ENCODE measurements at regions of chr1 and their contacts with region 1.

Region 1: DNA sequence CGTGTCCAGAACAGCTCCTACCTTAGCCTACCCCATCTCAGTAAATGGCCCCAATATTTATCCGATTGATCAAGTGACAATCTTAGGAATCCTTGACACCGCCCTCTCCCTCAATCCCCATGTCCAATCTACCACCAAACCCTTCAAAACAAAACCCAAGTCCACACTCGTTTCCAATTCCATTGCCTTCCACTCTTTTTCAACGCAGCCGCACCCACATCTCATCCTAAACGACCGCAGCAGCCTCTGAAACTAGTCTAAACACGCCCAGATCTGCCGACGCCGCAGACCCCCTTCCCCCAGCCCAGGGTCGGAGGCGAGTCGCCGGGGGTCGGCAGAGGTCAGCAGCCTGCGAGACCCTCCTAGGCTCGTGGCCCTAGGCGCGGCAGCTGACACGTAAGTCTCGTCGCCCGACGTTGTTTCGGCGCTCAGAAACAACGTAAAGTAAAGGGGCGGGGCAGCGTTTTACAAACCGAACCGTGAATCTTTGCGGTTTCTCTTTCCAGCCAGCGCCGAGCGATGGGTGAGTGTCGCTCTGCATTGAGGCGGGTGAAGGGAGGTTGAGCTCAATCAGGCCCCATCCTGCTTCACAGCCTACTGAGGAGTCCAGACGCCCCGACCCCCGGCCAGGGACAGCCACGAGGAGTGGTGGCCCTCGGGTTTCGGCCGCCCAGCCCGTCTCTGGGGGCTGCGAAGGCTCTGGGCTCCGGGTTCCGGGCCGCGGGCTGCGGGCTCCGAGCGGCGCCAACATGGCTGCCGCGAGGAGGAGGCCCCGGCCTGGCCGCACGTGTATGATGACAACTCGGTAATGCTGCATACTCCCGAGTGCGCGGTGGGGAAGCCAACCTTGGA is at the start of gene RPS8:
- DNase-seq: peak; percentile 96
- H3K4me3 Mint-ChIP-seq: peak within 1 kb of the TSS; percentile 91
- H3K27ac Mint-ChIP-seq: peak within 1 kb of the TSS; percentile 99
- H3K4me1 Mint-ChIP-seq: peaks cover 25% of the 10 kb centered on the region
- H3K27me3 Mint-ChIP-seq: no peaks in the 10 kb centered on the region
- CTCF ChIP-seq: no peak
- total RNA-seq, gene RPS8: 2,454 and 2,713 TPM in 2 replicates

Region 2: DNA sequence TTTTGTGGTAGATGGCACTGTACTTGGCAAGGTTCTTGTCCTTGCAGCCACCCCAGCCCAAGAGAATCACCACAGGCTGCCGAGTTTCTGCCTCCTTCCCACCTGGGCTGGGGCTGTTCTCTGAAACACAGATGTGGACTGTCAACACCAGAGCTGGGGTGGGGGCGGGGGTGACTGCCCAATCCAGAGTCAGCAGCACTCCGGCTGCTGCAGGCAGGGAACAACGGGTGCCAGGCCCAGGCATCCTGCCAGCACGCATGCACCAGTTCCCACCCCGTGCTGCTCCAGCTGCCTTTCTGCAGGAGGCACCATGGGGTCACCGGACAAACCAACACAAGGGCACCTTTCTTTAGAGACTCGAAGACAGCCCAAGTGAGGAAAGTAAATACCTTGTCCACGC is 115.1 kb before region 1 on chr1:
- CTCF ChIA-PET with region 1: no interaction called
- POLR2A ChIA-PET with region 1: no interaction called
- intact Hi-C with region 1: no loop called
- DNase-seq: peak; percentile 39
- H3K4me3 Mint-ChIP-seq: no peak overlapping the region
- H3K27ac Mint-ChIP-seq: no peak overlapping the region
- H3K4me1 Mint-ChIP-seq: peaks cover 6% of the 10 kb centered on the region
- H3K27me3 Mint-ChIP-seq: no peaks in the 10 kb centered on the region
- CTCF ChIP-seq: no peak

Region 3: DNA sequence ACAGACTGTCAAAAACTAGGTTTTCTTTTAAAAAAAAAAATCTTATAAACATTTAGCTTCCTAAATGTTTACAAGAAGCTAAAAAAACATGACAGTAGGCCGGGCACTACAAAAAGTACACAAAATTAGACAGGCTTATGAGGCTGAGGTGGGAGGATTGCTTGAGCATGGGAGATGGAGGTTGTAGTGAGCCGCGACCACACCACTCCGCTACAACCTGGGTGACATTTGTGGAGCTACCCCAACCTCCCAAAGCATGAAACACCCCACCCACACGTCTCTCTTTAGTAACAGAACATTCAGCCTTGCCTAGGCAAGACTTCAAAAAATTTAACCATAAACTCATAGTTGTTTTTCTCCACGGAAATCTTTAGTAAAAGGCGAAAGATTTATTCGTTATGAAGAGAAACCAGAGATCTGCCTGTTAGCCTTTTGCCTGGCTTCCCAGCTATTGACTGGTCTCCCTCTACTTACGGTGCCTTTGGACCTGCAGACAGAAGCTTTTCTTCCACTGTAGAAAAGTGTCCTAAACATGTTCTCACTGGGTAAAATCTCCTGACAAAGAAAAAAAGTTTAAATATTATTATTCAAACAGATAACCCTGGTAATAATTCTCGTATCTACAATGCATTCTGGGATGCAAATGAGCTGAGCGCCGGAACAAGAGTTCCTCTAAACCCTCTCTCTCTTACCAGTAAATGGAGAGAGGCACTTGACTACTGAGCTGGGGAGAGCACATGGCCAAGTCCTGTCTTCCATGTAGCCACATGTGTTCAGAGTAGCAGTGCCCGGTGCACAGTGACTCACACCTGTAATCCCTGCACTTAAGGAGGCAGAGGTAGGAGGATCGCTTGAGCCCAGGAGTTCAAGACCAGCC is 53.6 kb before region 1 on chr1:
- CTCF ChIA-PET with region 1: no interaction called
- POLR2A ChIA-PET with region 1: interaction called, 20 read pairs
- intact Hi-C with region 1: no loop called
- DNase-seq: peak; percentile 98
- H3K4me3 Mint-ChIP-seq: peak overlapping the region; percentile 39
- H3K27ac Mint-ChIP-seq: peak overlapping the region; percentile 98
- H3K4me1 Mint-ChIP-seq: peaks cover 23% of the 10 kb centered on the region
- H3K27me3 Mint-ChIP-seq: no peaks in the 10 kb centered on the region
- CTCF ChIP-seq: no peak

Region 4: DNA sequence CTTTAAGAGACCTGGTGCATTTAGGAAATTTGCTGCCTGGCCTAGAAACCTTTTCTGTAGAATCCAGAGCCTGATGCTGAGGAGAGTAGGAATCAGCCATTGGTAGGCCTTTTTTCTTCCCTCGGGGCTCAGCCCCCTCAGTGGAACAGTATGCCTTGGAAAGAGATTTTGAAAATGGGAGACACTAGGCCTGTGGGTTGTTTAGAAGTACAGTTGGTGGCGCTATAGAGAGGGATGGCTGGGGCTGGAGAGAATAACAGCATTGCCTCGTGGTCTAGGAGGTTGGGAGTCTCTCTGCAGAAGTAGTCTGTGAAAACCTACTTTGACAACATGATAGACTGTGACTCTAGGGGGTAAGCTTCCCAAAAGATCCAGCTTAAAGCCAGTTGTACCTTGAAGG is 27.4 kb before region 1 on chr1:
- CTCF ChIA-PET with region 1: interaction called, 5 read pairs
- POLR2A ChIA-PET with region 1: interaction called, 53 read pairs
- intact Hi-C with region 1: no loop called
- DNase-seq: no peak
- H3K4me3 Mint-ChIP-seq: no peak overlapping the region
- H3K27ac Mint-ChIP-seq: no peak overlapping the region
- H3K4me1 Mint-ChIP-seq: peaks cover 1% of the 10 kb centered on the region
- H3K27me3 Mint-ChIP-seq: no peaks in the 10 kb centered on the region
- CTCF ChIP-seq: no peak

Region 5: DNA sequence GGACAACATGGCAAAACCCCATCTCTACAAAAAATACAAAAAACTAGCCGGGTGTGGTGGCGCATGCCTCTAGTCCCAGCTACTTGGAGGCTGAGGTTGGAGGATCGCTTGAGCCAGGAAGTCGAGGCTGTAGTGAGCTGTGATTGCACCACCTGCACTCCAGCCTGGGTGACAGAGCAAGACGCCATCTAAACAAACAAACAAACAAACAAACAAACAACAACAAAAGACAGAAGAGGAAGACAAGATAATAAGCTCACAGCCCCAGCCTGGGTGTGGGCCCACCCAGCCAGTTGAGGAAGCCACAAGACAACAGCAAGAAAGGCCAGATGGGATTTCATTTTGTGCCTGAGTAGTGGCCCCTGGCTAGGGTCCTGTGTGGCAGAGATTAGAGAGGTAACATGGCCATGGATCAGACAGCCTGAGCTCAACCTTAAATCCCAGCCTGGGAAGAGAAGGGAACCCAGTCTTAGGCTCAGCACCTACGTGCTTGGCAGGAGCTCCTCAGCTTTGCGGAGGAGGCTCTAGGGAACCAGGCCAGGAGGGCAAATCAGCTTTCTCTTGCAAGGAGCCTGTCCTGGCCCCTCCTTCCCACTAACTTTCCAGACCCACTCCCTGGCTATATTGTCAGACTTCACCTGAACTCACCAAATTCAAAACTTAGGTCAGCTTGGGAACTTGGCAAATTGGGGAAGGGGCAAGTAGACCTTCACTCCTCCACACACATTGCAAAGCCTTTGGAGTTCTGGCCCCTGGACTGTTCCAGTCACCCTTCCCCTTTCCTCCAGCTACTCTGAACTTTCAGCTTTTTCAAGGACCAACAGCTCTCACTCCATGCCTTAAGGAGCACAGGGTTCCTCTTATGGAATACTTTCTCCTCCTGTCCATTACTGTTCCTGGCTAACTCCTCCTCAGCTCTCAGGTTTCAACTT is 17.7 kb after region 1 on chr1:
- CTCF ChIA-PET with region 1: interaction called, 14 read pairs
- POLR2A ChIA-PET with region 1: interaction called, 36 read pairs
- intact Hi-C with region 1: no loop called
- DNase-seq: no peak
- H3K4me3 Mint-ChIP-seq: no peak overlapping the region
- H3K27ac Mint-ChIP-seq: peak overlapping the region; percentile 85
- H3K4me1 Mint-ChIP-seq: peaks cover 7% of the 10 kb centered on the region
- H3K27me3 Mint-ChIP-seq: no peaks in the 10 kb centered on the region
- CTCF ChIP-seq: no peak

Region 6: GRCh38 chr1:44812822-44813543 is 37.7 kb after region 1 on chr1:
- CTCF ChIA-PET with region 1: interaction called, 3 read pairs
- POLR2A ChIA-PET with region 1: interaction called, 26 read pairs
- intact Hi-C with region 1: no loop called
- DNase-seq: no peak
- H3K4me3 Mint-ChIP-seq: no peak overlapping the region
- H3K27ac Mint-ChIP-seq: no peak overlapping the region
- H3K4me1 Mint-ChIP-seq: peaks cover 46% of the 10 kb centered on the region
- H3K27me3 Mint-ChIP-seq: no peaks in the 10 kb centered on the region
- CTCF ChIP-seq: no peak

Region 7: GRCh38 chr1:45339789-45340570 is 564.7 kb after region 1 on chr1 and contains the starts of genes MUTYH and TOE1:
- CTCF ChIA-PET with region 1: no interaction called
- POLR2A ChIA-PET with region 1: interaction called, 18 read pairs
- intact Hi-C with region 1: no loop called
- DNase-seq: peak; percentile 89
- H3K4me3 Mint-ChIP-seq: peak within 1 kb of the TSS; percentile 93
- H3K27ac Mint-ChIP-seq: peak within 1 kb of the TSS; percentile 93
- H3K4me1 Mint-ChIP-seq: peaks cover 4% of the 10 kb centered on the region
- H3K27me3 Mint-ChIP-seq: no peaks in the 10 kb centered on the region
- CTCF ChIP-seq: no peak
- total RNA-seq, gene MUTYH: 31.2 and 31.3 TPM in 2 replicates
- total RNA-seq, gene TOE1: 11.1 and 13.3 TPM in 2 replicates

Measured in MCF 10A (cell line).